ENCODE measurements at regions of chr12 and their contacts with region 1.

Region 1: GRCh38 chr12:19186722-19187661 is 57.5 kb downstream of the PLEKHA5 start:
- DNase-seq: no peak
- ATAC-seq: peak; percentile 32 to 38

Region 2: GRCh38 chr12:18250313-18250916 is 936.6 kb before region 1 on chr12:
- intact Hi-C with region 1: loop called in 1 of 2 experiments (anchors 10 kb)
- DNase-seq: no peak
- ATAC-seq: peak in 1 of 2 donors; percentile 44

Region 3: GRCh38 chr12:18552829-18553228 is 634.2 kb before region 1 on chr12:
- intact Hi-C with region 1: loop called in 1 of 2 experiments (anchors 2 kb)
- DNase-seq: no peak
- ATAC-seq: peak in 1 of 2 donors; percentile 55

Region 4: GRCh38 chr12:18932715-18933114 is 254.3 kb before region 1 on chr12:
- intact Hi-C with region 1: no loop called
- DNase-seq: no peak
- ATAC-seq: no peak

Region 5: DNA sequence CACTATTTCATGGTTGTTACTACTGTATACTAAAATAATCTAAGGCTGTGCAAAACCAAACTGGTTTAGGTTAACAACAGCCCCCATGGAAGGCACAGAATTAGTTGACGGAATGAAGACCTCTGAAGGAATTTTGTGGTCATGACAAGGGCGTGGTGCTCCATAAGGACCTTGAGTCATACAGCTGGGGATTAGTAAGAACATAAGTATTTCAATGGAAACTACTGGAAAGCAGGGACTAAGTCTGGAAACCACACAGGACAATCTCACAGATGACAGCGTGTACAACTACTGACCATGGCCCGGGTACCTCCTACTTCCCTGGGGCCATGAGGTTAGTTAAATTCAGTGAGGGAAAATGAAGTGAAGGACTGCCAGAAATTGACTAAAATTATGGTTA is 156.0 kb before region 1 on chr12:
- intact Hi-C with region 1: loop called in 1 of 2 experiments (anchors 10 kb)
- DNase-seq: no peak
- ATAC-seq: peak in 1 of 2 donors; percentile 59

Region 6: GRCh38 chr12:19288603-19289244 is 101.7 kb after region 1 on chr12:
- intact Hi-C with region 1: loop called in 1 of 2 experiments (anchors 10 kb)
- DNase-seq: no peak
- ATAC-seq: no peak